Heart left ventricle (tissue), 16 donors: ENCODE measurements at regions of chr9 and their contacts with region 1.

Region 1: DNA sequence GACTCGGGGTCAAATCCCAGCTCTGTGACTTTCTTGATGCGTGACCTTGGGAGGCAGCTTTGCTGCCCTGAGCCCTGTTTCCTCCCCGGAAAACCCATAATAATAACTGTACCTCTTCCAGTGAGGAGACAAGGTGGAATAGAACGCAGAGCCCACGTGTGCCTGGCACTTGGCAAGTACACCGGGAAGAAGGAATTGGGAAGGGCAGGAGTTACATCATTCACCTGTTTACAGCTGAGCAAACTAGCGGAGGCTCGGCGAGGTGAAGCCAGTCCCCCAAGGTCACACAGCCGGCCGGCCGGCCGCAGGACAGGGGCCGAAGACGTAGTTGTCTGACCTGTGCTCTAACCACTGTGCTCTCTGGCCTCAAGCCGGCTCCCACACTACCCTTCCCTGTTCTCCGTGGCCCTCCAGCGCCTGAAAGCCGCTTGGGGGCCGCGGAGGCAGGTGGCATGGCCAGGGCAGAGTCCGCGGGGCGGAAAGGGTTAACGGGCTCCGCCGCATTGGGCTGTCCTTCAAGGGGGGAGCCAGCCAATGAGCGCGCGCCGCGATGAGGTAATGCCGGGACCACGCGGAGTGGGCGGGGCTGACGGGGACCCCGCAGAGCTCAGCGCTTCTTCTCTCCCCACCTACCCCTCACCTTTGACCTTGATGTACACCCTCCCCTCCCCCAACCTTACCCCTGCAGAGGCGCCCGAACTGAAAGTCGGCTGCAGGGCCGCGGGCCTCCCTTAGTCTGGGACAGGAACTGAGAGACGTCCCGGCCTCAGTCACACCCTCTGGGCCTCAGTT is 125.2 kb downstream of the C9orf50 start:
- DNase-seq: peak; percentile 96 to 98 (median 97)
- ATAC-seq: peak; percentile 84 to 89 (median 86)
- H3K4me3 ChIP-seq: peak overlapping the region; percentile 30 to 72 (median 62)
- H3K27ac ChIP-seq: peak overlapping the region; percentile 93 to 100 (median 98)
- H3K4me1 ChIP-seq: peaks cover 8 to 92% (median 65%) of the 10 kb centered on the region in 12 donors
- H3K27me3 ChIP-seq: no peaks in the 10 kb centered on the region
- CTCF ChIP-seq: no peak
- POLR2A ChIP-seq: peak in 1 of 2 donors; percentile 14

Region 2: DNA sequence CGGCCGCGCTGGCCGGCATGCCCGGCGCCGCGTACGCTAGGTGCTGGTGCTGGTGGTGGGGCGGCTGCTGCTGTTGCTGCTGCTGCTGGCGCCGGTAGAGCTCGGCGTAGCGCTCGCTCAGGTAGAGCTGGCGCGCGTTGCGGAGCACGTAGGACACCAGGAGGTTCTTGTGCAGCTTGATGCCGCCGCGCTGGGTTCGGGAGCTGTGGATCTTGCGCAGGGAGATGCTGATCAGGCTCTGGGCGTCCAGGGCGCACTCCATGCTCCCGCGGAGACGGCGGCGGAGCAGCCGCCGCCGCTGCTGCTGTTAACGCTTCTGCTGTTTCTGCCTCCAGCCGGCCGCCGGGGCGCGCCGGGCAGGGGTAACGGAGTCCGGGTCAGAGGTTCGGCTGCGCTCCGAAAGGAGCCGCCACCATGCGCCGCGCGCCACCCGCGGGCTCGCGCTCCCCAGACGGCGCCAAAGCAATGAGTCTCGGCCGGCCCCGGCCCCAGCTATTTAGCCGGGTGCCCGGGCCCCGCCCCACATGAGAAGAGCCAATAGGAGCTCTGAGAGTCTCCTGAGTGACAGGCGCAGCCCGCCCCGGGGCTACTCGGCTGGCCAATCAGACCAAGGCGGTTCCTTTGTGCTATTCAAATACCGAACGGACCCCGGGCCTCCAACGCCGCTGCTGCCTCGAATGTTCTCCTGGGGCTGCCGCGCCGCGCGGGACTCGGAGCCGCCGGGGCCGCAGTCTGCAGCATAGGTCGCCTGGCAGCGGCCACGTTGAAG is 317.8 kb before region 1 on chr9 and contains the start of gene IER5L:
- intact Hi-C with region 1: loop called in 5 of 10 experiments (anchors 2 to 5 kb)
- DNase-seq: peak; percentile 94 to 98 (median 97)
- ATAC-seq: peak; percentile 85 to 90 (median 89)
- H3K4me3 ChIP-seq: peak within 1 kb of the TSS; percentile 77 to 99 (median 95)
- H3K27ac ChIP-seq: peak within 1 kb of the TSS; percentile 81 to 100 (median 99)
- H3K4me1 ChIP-seq: peaks cover 3 to 43% (median 25%) of the 10 kb centered on the region in 12 donors
- H3K27me3 ChIP-seq: no peaks in the 10 kb centered on the region
- CTCF ChIP-seq: no peak
- POLR2A ChIP-seq: peak; percentile 90 to 99
- total RNA-seq, gene IER5L: 4.1 to 18.4 (median 5.5) TPM

Region 3: DNA sequence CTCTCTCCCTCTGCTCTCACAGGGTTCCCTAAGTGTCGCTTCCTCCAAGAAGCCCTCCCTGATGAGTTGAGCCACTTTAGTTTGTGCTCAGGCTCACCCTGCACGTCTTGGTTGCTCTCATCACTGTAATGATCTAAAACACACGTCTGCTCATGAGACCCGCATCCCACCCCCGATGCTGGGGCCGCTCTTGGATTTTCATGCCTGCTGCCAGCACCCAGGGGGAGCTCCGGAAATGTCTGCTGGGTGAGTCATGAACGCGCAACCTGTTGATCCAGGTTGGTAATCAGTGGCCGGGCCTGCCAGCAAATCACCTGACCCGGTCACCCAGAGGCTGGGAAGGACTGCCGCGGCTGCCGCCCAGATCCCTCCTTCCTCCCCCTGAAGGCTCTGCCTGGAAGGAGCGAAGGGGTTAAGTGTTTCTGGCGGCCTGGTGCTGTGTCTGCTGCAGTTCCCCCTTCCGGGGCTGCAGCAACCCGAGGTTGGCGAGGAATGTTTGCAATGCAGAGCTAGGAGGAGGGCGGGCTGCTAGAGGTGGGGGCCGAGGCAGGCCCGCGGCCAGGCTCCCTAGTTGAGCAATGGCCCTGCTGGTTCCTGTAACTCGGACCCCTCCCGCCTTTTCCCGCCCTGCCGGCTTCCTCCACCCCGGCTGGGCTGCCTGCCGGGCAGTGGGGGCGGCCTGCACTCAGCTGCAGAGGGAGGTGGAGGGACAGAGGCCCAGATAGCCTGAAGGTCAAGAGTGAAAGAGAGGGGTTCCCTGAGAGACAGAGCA is 161.6 kb before region 1 on chr9:
- intact Hi-C with region 1: loop called in 2 of 10 experiments (anchors 5 kb)
- DNase-seq: peak; percentile 92 to 95 (median 94)
- ATAC-seq: peak; percentile 85 to 94 (median 89)
- H3K4me3 ChIP-seq: peak overlapping the region in 9 of 12 donors; percentile 16 to 40 (median 25)
- H3K27ac ChIP-seq: peak overlapping the region; percentile 39 to 97 (median 88)
- H3K4me1 ChIP-seq: peaks cover 12 to 65% (median 43%) of the 10 kb centered on the region in 12 donors
- H3K27me3 ChIP-seq: no peaks in the 10 kb centered on the region
- CTCF ChIP-seq: no peak
- POLR2A ChIP-seq: peak in 1 of 2 donors; percentile 46

Region 4: GRCh38 chr9:129460323-129461261 is 35.1 kb before region 1 on chr9:
- intact Hi-C with region 1: loop called in 2 of 10 experiments (anchors 1 kb)
- DNase-seq: peak; percentile 97 to 99 (median 98)
- ATAC-seq: peak; percentile 86 to 94 (median 92)
- H3K4me3 ChIP-seq: peak overlapping the region; percentile 16 to 60 (median 51)
- H3K27ac ChIP-seq: peak overlapping the region; percentile 91 to 100 (median 98)
- H3K4me1 ChIP-seq: peaks cover 9 to 52% (median 43%) of the 10 kb centered on the region in 12 donors
- H3K27me3 ChIP-seq: no peaks in the 10 kb centered on the region
- CTCF ChIP-seq: peak in 8 of 12 donors; percentile 5 to 51 (median 28)
- POLR2A ChIP-seq: peak; percentile 39 to 79

Region 5: GRCh38 chr9:129550199-129550839 is 54.6 kb after region 1 on chr9:
- intact Hi-C with region 1: loop called in 6 of 10 experiments (anchors 2 to 5 kb)
- DNase-seq: peak; percentile 83 to 90 (median 87)
- ATAC-seq: peak; percentile 55 to 93 (median 86)
- H3K4me3 ChIP-seq: peak overlapping the region; percentile 42 to 66 (median 58)
- H3K27ac ChIP-seq: peak overlapping the region in 11 of 12 donors; percentile 56 to 86 (median 81)
- H3K4me1 ChIP-seq: peaks cover 0 to 31% (median 24%) of the 10 kb centered on the region in 12 donors
- H3K27me3 ChIP-seq: peaks cover 0 to 14% (median 0%) of the 10 kb centered on the region in 9 donors
- CTCF ChIP-seq: peak in 1 of 12 donors; percentile 8
- POLR2A ChIP-seq: no peak

Region 6: DNA sequence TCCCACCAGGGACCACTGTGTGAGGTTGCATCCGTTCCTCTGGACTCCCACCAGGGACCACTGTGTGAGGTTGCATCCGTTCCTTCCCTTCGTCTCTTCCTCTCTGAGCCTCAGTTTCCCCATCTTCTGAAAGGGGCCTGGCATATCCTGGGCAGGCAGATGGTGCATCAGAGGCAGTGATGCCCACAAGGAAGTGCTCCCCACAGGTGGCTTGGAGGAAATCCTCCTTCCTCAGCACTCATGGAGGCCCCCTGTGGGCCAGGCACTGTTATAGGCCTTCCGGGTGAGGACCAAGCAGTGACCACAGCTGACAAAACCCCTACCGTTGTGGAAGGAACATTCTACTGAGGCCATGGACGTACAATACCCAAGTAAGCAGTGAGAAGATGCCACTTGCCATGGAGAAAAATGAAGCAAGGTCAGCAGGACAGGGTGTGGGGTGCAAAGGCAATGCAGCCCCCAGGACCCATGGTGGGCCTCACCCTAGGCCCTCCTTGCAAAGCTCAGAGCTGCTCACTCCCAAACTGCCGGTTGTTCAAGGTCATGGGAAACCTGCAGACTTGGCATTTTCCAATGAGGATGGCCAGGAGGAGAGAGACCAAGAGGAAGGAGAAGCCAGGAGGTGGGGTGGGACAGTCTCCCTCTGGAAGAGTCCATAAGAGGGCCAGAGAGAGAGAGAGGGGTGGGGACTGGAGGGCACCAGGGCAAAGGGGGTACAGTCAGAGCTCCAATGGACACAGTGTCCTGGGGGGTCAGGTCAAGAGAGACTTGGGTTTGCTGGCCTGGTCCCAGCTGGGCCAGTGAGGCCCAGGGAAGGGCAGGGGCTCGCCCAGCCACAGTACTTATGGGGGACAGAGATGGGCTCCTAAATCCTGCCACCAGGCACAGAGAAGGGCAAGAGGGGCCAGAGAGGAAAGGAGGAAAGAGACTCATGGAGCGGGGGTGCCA is 74.0 kb after region 1 on chr9:
- intact Hi-C with region 1: loop called in 3 of 10 experiments (anchors 5 to 10 kb)
- DNase-seq: no peak
- ATAC-seq: peak; percentile 25 to 52 (median 46)
- H3K4me3 ChIP-seq: peak overlapping the region in 9 of 12 donors; percentile 43 to 66 (median 57)
- H3K27ac ChIP-seq: peak overlapping the region in 11 of 12 donors; percentile 28 to 82 (median 72)
- H3K4me1 ChIP-seq: peaks cover 0 to 41% (median 28%) of the 10 kb centered on the region in 12 donors
- H3K27me3 ChIP-seq: peaks cover 0 to 17% (median 0%) of the 10 kb centered on the region in 9 donors
- CTCF ChIP-seq: peak in 10 of 12 donors; percentile 21 to 52 (median 36)
- POLR2A ChIP-seq: no peak

Region 7: DNA sequence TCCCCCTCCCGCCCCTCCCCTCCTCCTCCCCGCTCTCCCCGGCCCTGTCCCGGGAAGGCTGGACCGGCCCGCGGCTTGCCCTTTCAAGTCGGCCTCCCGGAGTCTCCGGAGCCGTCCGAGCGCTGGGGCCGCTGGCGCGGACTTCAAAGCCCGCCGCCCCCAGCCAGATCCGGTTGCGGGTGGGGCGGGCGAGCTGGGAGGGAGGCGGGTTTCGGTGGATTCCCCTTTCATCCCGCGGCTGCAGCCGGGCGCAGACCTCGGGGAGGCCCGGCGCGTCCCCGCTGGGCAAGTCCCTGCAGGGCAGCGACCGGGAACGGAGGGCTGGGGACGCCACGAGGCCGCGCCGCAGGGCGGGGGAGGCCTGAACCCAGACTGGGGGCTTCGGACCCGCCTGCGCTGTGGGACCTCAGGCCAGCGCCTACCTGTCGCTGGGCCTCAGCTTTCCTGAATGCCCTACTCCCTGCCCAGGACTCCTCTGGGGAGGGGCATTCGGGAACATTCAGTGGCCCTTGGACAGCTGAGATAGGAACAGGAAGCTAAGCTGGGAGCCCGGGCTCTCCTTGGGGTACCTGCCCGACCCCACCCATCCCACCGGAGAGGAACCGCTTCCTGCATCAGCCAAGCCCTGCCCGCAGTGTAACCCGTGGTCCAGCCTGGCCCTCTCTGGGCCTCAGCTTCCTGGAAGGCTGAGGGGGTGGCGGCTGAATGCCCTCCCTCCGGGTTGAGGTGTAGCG is 101.8 kb after region 1 on chr9:
- intact Hi-C with region 1: loop called in 1 of 10 experiments (anchors 5 kb)
- DNase-seq: peak; percentile 67 to 83 (median 72)
- ATAC-seq: peak; percentile 6 to 72 (median 68)
- H3K4me3 ChIP-seq: peak overlapping the region in 11 of 12 donors; percentile 30 to 62 (median 54)
- H3K27ac ChIP-seq: peak overlapping the region; percentile 35 to 93 (median 87)
- H3K4me1 ChIP-seq: peaks cover 0 to 37% (median 19%) of the 10 kb centered on the region in 12 donors
- H3K27me3 ChIP-seq: peaks cover 0 to 21% (median 0%) of the 10 kb centered on the region in 9 donors
- CTCF ChIP-seq: no peak
- POLR2A ChIP-seq: no peak